ENCODE measurements at regions of chr2 and their contacts with region 1.

Region 1: GRCh38 chr2:15577071-15577735 is 14.5 kb upstream of the DDX1 start:
- DNase-seq: peak; percentile 70
- H3K4me3 ChIP-seq: no peak overlapping the region
- H3K27ac ChIP-seq: no peak overlapping the region
- H3K27me3 ChIP-seq: no peaks in the 10 kb centered on the region
- CTCF ChIP-seq: peak; percentile 91

Region 2: DNA sequence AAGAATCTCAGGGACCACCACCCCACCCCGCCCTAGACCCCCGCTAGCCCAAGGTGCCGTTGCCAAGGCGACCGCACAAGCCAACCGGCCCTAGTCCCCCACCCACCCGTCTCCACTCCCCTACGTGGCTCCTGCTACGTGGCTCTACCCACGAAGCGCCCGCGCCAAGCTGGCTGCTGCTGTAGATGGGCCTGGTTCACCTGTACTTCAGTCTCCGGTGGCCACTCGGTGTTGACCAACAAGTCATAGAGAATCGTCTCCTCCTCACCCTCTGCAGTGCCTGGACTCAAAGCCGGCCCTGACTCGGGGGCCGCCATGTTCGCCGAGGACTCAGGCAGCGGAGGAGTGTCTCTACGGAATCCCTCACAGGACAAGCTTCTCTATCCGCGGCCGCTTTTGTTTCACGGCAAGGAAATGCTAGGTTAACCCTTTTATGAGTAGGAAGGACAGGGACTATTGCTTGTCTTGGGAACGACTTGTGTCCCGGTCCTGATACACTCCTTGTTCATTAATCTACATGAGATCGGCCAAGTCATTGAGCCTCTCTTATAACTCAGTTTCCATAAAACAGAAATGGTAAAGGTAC is 16.1 kb before region 1 on chr2 and contains the start of gene NBAS:
- CTCF ChIA-PET with region 1: interaction called, 49 read pairs
- POLR2A ChIA-PET with region 1: no interaction called
- DNase-seq: peak; percentile 65
- H3K4me3 ChIP-seq: peak within 1 kb of the TSS; percentile 91
- H3K27ac ChIP-seq: peak within 1 kb of the TSS; percentile 73
- H3K27me3 ChIP-seq: peaks cover 5% of the 10 kb centered on the region
- CTCF ChIP-seq: no peak
- polyA plus RNA-seq, gene NBAS: 45.0 and 53.8 TPM in 2 replicates

Region 3: DNA sequence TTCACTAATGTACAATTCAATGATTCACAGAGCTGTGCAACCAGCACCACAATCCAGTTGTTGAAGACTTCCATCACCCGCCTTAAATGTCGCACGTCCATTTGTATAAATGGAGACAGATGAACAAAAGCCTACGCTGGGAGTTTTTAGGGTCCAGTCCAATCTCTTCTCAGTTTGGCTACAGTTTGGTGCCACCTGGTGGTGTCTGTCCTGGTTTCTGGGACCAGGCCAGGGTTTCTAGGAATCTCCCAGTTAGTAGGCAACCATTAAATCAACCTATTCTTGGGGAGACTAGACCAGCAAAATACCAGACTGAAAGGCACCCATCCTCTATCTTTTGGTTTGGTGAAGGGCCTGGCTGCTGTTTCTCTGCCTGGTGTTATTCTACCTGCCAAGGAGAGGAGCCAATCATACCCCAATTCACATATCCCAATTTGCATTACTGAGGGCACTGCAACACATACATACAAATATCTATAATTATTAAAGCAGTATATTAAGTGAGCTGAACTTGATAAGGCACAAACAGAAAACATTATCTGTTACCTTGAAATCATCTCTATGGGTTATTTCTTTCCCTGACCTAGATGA is 11.2 kb after region 1 on chr2:
- CTCF ChIA-PET with region 1: interaction called, 38 read pairs
- POLR2A ChIA-PET with region 1: no interaction called
- DNase-seq: peak; percentile 7
- H3K4me3 ChIP-seq: no peak overlapping the region
- H3K27ac ChIP-seq: no peak overlapping the region
- H3K27me3 ChIP-seq: no peaks in the 10 kb centered on the region
- CTCF ChIP-seq: peak; percentile 69

Region 4: DNA sequence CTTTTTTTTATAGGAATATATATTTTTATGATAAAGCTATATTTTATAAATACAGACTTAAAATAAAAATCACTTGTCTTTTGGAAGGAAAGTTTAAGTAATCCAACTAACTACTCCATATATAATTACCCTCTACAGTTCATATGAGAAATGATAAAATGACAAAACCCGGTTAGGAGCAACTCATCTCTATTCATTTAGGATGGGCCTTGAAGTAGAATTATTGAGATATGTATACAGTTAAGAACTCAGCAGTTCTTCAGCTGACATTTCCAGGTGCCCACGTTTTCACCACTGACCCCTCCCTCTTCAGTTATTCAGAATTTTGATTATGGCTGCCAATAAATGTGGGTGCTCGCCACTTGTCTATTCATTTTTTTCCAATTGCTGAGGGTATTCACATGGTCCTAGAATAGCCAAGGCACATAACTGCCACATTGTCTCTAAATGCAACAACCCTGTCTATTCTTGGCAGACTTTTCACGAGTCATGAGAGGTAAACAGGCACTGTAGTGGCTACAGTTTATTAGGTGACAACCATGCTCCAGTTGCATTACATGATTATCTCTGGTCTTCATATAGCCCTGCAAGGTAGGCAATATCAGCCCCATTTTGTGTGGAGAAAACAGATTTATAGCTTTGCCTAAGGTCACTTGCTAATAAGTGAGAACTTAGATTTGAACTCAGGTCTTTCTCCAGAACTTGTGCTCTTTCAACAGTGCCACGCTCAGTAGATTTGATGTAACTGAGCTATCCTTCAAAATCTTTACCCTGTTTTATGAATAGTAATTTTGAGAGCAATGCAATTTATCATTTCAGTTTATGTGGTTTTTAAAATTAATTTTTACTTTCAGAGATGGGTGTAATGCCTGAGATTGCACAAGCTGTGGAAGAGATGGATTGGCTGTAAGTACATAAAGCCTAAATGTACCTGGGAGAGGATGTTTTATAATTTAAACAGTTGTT is 17.4 kb after region 1 on chr2:
- CTCF ChIA-PET with region 1: interaction called, 25 read pairs
- POLR2A ChIA-PET with region 1: no interaction called
- DNase-seq: no peak
- H3K4me3 ChIP-seq: no peak overlapping the region
- H3K27ac ChIP-seq: no peak overlapping the region
- H3K27me3 ChIP-seq: no peaks in the 10 kb centered on the region
- CTCF ChIP-seq: no peak

Region 5: DNA sequence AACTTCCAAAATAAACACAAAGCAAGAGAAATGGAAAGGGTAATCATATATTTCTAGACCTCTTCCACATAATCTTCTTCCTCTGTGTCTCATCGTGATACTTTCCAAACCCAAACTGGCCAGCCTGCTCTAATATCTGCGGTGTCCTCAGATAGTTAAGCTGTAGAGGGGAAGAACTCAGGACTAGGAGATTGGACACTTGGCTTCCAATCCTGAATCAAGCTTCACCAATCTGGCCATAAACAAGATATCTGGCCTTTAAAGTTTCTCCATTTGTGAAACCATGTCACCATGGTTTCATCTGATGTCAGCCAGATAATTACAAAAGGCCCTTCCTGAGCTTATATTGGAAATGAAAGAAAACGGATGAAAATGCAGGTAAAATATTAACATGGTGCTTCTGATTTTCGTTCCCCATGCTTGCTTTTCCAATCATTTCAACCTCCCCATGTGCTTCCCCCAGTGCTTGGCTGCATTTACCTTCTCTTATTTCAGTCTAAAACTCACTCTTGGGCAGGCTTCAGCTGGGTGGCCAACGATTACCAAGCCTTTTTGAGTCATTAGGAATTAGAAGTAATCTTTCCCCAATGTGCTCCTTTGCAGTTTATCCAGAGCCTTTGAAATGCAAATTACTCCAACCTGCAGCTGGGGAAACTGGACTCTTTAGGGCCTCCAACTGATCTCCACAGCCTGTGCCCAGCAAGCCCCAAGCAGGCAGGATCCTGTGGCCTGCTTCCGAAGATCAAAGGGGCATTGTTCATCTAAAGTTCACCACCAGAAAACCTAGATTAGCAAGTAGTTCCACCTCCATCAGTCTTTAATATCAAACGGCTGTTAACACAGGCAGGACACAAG is 318.6 kb after region 1 on chr2:
- CTCF ChIA-PET with region 1: no interaction called
- POLR2A ChIA-PET with region 1: no interaction called
- DNase-seq: no peak
- H3K4me3 ChIP-seq: no peak overlapping the region
- H3K27ac ChIP-seq: no peak overlapping the region
- H3K27me3 ChIP-seq: no peaks in the 10 kb centered on the region
- CTCF ChIP-seq: no peak